ENCODE measurements at regions of chr2 and their contacts with region 1.

Region 1: GRCh38 chr2:215973954-215974702 is 39.2 kb downstream of the MREG start:
- DNase-seq: peak; percentile 88
- H3K4me3 Mint-ChIP-seq: no peak overlapping the region
- H3K27ac Mint-ChIP-seq: no peak overlapping the region
- H3K4me1 Mint-ChIP-seq: peaks cover 20% of the 10 kb centered on the region
- H3K27me3 Mint-ChIP-seq: no peaks in the 10 kb centered on the region
- CTCF ChIP-seq: no peak

Region 2: DNA sequence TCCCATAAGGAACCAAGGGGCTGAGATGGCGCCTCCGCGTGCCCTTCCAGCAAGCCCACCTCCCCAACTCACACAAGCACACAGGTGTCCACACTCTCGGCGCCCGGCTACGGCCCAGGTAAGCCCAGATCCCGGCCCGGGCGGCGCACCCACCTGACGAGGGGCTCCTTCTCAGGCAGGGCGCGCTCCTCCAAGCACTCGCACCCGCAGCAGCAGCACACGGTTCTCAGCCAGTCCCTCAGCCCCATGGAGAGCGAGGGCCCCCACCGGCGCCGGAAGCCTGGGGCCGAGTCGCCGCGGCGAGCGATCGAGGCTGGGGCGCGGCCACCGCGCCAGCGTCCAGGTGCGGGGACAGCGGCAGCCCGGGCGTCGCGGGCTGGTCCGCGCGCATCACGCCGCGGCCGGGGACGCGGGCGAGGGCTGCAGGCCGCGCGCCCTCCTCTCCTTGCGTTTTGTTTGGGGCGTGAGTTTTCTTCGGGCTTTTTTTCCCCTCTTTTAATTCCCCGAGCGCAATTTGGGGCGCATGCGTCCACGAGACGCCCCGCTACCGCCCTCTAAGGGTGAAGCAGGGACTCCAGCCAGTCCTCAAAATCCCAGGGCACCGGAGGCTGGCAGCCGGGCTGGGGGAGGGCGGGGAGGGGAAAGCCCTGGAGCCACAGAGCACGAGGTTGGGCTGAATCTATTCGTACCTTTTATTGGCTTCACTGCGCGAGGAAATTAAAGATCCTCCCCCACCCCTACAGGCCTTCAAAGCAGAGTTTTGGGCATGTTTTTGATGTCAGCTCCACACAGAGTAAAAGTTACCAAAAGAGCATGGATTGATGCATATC is 39.2 kb after region 1 on chr2 and contains the start of gene MREG:
- CTCF ChIA-PET with region 1: interaction called, 5 read pairs
- POLR2A ChIA-PET with region 1: interaction called, 8 read pairs
- intact Hi-C with region 1: loop called (anchors 5 kb)
- DNase-seq: peak; percentile 89
- H3K4me3 Mint-ChIP-seq: peak within 1 kb of the TSS; percentile 82
- H3K27ac Mint-ChIP-seq: peak within 1 kb of the TSS; percentile 84
- H3K4me1 Mint-ChIP-seq: peaks cover 31% of the 10 kb centered on the region
- H3K27me3 Mint-ChIP-seq: no peaks in the 10 kb centered on the region
- CTCF ChIP-seq: peak; percentile 52
- total RNA-seq, gene MREG: 6.8 and 10.4 TPM in 2 replicates